ENCODE measurements at regions of chr4 and their contacts with region 1.

Region 1: DNA sequence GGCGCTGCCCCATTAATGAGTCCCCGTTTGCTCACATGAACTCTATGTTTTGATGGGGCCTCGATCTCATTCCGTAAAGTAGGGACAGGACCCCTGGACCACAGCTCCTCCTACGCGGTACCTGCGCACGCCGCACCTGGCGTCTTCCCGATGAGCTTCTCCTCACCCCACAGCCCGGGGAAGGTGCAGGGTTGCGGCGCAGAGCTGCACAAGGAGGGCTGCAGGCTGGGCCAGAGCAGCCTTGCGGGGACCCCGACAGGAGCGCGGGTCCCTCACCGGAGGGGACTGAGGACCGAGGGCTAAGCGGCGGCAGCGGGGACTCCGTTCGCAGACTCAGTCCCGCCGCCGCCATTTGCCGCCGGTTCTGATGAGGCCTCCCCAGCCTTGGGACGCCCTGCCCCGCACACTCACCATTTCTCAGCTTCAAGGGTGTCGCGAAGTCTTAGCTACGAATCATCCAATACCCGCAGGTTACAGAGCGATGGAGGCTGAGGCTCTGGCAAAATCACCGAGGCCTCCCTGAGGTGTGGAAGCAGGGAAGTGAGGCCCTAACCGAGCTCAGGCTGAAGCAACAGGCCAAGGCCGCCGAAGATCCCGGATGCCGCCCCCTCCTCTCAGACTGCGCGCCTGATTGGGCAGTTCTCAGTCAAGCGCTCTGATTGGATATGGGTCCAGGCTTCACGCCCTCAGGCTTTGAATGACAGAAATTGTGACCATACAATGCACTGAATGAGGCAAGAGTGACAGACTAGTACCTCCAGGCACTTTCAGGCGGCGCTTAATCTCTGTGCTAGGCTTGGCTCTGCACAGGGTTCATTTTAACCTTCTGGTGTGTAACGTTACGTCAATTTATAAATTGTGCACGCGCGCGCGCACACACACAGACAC is 25.1 kb downstream of the ZNF721 start:
- DNase-seq: peak; percentile 91 to 98
- ATAC-seq: peak; percentile 96 to 100 (median 97)
- H3K4me3 ChIP-seq: peak overlapping the region; percentile 92
- H3K4me3 Mint-ChIP-seq: peak overlapping the region; percentile 99
- H3K27ac ChIP-seq: peak overlapping the region; percentile 98
- H3K27ac Mint-ChIP-seq: peak overlapping the region; percentile 98 to 100
- H3K4me1 ChIP-seq: peaks cover 17% of the 10 kb centered on the region
- H3K4me1 Mint-ChIP-seq: peaks cover 62 to 67% of the 10 kb centered on the region in 2 donors
- H3K27me3 ChIP-seq: no peaks in the 10 kb centered on the region
- H3K27me3 Mint-ChIP-seq: no peaks in the 10 kb centered on the region
- CTCF ChIP-seq: no peak

Region 2: DNA sequence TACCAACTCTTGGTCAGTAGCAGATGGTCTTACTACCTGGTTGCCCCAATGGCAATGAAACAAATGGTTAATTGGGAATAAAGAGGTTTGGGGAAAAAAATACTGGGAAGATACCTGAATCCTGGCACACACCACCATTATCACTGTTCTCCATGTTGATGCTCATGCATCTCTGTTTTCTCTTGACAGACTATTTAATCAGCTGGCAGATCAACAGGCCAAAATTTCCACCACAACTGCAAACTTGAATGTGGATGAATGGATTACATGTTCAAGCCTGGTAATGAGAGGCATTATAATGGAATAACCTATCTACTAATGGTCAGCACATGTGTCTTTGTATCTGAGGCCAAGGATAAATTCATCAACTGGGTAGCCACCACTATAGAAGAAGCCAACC is 20.5 kb before region 1 on chr4:
- intact Hi-C with region 1: no loop called
- DNase-seq: no peak
- ATAC-seq: no peak
- H3K4me3 ChIP-seq: no peak overlapping the region
- H3K4me3 Mint-ChIP-seq: no peak overlapping the region
- H3K27ac ChIP-seq: no peak overlapping the region
- H3K27ac Mint-ChIP-seq: no peak overlapping the region
- H3K4me1 ChIP-seq: no peaks in the 10 kb centered on the region
- H3K4me1 Mint-ChIP-seq: no peaks in the 10 kb centered on the region
- H3K27me3 ChIP-seq: no peaks in the 10 kb centered on the region
- H3K27me3 Mint-ChIP-seq: no peaks in the 10 kb centered on the region
- CTCF ChIP-seq: no peak

Region 3: DNA sequence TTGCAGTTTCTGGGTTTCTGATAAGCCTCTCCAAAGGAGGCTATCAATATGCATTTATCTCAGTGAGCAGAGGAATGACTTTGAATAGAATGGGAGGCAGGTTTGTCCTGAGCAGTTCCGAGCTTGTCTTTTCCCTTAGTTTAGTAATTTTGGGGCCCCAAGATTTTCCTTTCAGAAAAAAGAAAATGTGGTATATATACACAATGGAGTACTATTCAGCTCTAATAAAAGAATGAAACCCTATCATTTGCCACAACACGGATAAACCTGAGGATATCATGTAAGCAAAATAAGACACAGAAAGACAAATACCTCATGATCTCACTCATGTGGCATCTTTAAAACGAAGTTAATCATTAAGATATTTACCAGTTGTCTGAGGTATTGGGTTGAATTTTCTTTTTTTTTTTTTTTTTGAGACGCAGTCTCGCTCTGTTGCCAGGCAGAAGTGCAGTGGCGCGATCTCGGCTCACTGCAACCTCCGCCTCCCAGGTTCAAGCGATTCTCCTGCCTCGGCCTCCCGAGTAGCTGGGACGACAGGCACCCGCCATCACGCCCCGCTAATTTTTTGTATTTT is 24.6 kb after region 1 on chr4:
- intact Hi-C with region 1: loop called (anchors 2 kb)
- DNase-seq: peak in 1 of 2 donors; percentile 44
- ATAC-seq: peak; percentile 37 to 53 (median 46)
- H3K4me3 ChIP-seq: peak overlapping the region; percentile 94
- H3K4me3 Mint-ChIP-seq: peak overlapping the region; percentile 97
- H3K27ac ChIP-seq: peak overlapping the region; percentile 93
- H3K27ac Mint-ChIP-seq: peak overlapping the region; percentile 94 to 99
- H3K4me1 ChIP-seq: peaks cover 17% of the 10 kb centered on the region
- H3K4me1 Mint-ChIP-seq: peaks cover 26 to 34% of the 10 kb centered on the region in 2 donors
- H3K27me3 ChIP-seq: no peaks in the 10 kb centered on the region
- H3K27me3 Mint-ChIP-seq: no peaks in the 10 kb centered on the region
- CTCF ChIP-seq: no peak

Measured in natural killer cell (primary cell).